ENCODE measurements at regions of chrX and their contacts with region 1.

Region 1: GRCh38 chrX:19889582-19890342 is 2.4 kb upstream of the SH3KBP1 start:
- DNase-seq: peak in 1 of 4 donors; percentile 10
- ATAC-seq: no peak
- H3K4me3 ChIP-seq: no peak overlapping the region
- H3K27ac ChIP-seq: no peak overlapping the region
- H3K4me1 ChIP-seq: no peaks in the 10 kb centered on the region
- H3K27me3 ChIP-seq: no peaks in the 10 kb centered on the region
- CTCF ChIP-seq: no peak
- POLR2A ChIP-seq: no peak

Region 2: GRCh38 chrX:19544693-19545305 is 345.0 kb before region 1 on chrX:
- intact Hi-C with region 1: loop called (anchors 10 kb)
- DNase-seq: peak; percentile 40 to 67 (median 56)
- ATAC-seq: no peak
- H3K4me3 ChIP-seq: no peak overlapping the region
- H3K27ac ChIP-seq: no peak overlapping the region
- H3K4me1 ChIP-seq: no peaks in the 10 kb centered on the region
- H3K27me3 ChIP-seq: no peaks in the 10 kb centered on the region
- CTCF ChIP-seq: peak; percentile 38 to 71 (median 54)
- POLR2A ChIP-seq: no peak